Activated B cell treated with CpG ODN at 0.5 μM for 24 hours (primary cell): ENCODE measurements at regions of chr2 and their contacts with region 1.

Region 1: GRCh38 chr2:157404363-157404762 is 39.5 kb downstream of the CYTIP start:
- DNase-seq: no peak
- ATAC-seq: peak; percentile 96
- H3K4me3 Mint-ChIP-seq: peak overlapping the region; percentile 50
- H3K27ac Mint-ChIP-seq: peak overlapping the region; percentile 88
- H3K4me1 Mint-ChIP-seq: peaks cover 62% of the 10 kb centered on the region
- H3K27me3 Mint-ChIP-seq: no peaks in the 10 kb centered on the region
- CTCF ChIP-seq: no peak

Region 2: GRCh38 chr2:157245846-157246764 is 158.3 kb before region 1 on chr2:
- CTCF ChIA-PET with region 1: no interaction called
- POLR2A ChIA-PET with region 1: no interaction called
- intact Hi-C with region 1: no loop called
- DNase-seq: no peak
- ATAC-seq: no peak
- H3K4me3 Mint-ChIP-seq: no peak overlapping the region
- H3K27ac Mint-ChIP-seq: no peak overlapping the region
- H3K4me1 Mint-ChIP-seq: no peaks in the 10 kb centered on the region
- H3K27me3 Mint-ChIP-seq: no peaks in the 10 kb centered on the region
- CTCF ChIP-seq: no peak

Region 3: GRCh38 chr2:157336137-157337010 is 68.0 kb before region 1 on chr2:
- CTCF ChIA-PET with region 1: interaction called, 22 read pairs
- POLR2A ChIA-PET with region 1: interaction called, 4 read pairs
- intact Hi-C with region 1: loop called (anchors 2 kb)
- DNase-seq: no peak
- ATAC-seq: peak; percentile 56
- H3K4me3 Mint-ChIP-seq: peak overlapping the region; percentile 11
- H3K27ac Mint-ChIP-seq: no peak overlapping the region
- H3K4me1 Mint-ChIP-seq: peaks cover 6% of the 10 kb centered on the region
- H3K27me3 Mint-ChIP-seq: no peaks in the 10 kb centered on the region
- CTCF ChIP-seq: peak; percentile 80

Region 4: GRCh38 chr2:157363612-157364101 is 40.7 kb before region 1 on chr2:
- CTCF ChIA-PET with region 1: no interaction called
- POLR2A ChIA-PET with region 1: interaction called, 4 read pairs
- intact Hi-C with region 1: loop called (anchors 2 kb)
- DNase-seq: no peak
- ATAC-seq: peak; percentile 52
- H3K4me3 Mint-ChIP-seq: peak overlapping the region; percentile 16
- H3K27ac Mint-ChIP-seq: peak overlapping the region; percentile 57
- H3K4me1 Mint-ChIP-seq: peaks cover 33% of the 10 kb centered on the region
- H3K27me3 Mint-ChIP-seq: no peaks in the 10 kb centered on the region
- CTCF ChIP-seq: no peak

Region 5: GRCh38 chr2:157420771-157421323 is 16.5 kb after region 1 on chr2:
- CTCF ChIA-PET with region 1: interaction called, 10 read pairs
- POLR2A ChIA-PET with region 1: interaction called, 49 read pairs
- intact Hi-C with region 1: loop called (anchors 1 kb)
- DNase-seq: no peak
- ATAC-seq: peak; percentile 73
- H3K4me3 Mint-ChIP-seq: peak overlapping the region; percentile 63
- H3K27ac Mint-ChIP-seq: peak overlapping the region; percentile 90
- H3K4me1 Mint-ChIP-seq: peaks cover 58% of the 10 kb centered on the region
- H3K27me3 Mint-ChIP-seq: no peaks in the 10 kb centered on the region
- CTCF ChIP-seq: no peak

Region 6: DNA sequence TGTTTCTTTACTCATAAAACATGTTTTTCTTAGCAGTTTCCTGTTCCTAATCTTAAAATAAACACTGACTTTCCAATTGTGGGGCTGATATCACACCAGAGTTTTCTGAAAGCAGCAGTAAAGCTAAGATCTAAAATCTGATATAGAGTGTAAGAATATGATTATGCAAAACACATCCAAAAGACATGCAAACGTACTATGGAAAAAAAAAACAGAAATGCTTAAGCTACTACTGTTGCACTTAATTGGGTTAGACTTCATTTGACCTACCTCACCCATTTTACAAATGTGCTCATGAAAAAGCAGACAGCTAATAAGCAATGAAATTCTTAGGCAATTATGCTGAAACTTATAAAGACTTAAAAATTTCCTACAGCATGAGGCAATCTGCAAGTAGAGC is 29.0 kb after region 1 on chr2:
- CTCF ChIA-PET with region 1: no interaction called
- POLR2A ChIA-PET with region 1: interaction called, 11 read pairs
- intact Hi-C with region 1: no loop called
- DNase-seq: no peak
- ATAC-seq: no peak
- H3K4me3 Mint-ChIP-seq: peak overlapping the region; percentile 57
- H3K27ac Mint-ChIP-seq: peak overlapping the region; percentile 61
- H3K4me1 Mint-ChIP-seq: peaks cover 86% of the 10 kb centered on the region
- H3K27me3 Mint-ChIP-seq: no peaks in the 10 kb centered on the region
- CTCF ChIP-seq: no peak

Region 7: GRCh38 chr2:157468931-157469708 is 64.8 kb after region 1 on chr2:
- CTCF ChIA-PET with region 1: interaction called, 5 read pairs
- POLR2A ChIA-PET with region 1: interaction called, 21 read pairs
- intact Hi-C with region 1: loop called (anchors 1 kb)
- DNase-seq: no peak
- ATAC-seq: peak; percentile 81
- H3K4me3 Mint-ChIP-seq: peak overlapping the region; percentile 81
- H3K27ac Mint-ChIP-seq: peak overlapping the region; percentile 99
- H3K4me1 Mint-ChIP-seq: peaks cover 87% of the 10 kb centered on the region
- H3K27me3 Mint-ChIP-seq: no peaks in the 10 kb centered on the region
- CTCF ChIP-seq: no peak

Region 8: DNA sequence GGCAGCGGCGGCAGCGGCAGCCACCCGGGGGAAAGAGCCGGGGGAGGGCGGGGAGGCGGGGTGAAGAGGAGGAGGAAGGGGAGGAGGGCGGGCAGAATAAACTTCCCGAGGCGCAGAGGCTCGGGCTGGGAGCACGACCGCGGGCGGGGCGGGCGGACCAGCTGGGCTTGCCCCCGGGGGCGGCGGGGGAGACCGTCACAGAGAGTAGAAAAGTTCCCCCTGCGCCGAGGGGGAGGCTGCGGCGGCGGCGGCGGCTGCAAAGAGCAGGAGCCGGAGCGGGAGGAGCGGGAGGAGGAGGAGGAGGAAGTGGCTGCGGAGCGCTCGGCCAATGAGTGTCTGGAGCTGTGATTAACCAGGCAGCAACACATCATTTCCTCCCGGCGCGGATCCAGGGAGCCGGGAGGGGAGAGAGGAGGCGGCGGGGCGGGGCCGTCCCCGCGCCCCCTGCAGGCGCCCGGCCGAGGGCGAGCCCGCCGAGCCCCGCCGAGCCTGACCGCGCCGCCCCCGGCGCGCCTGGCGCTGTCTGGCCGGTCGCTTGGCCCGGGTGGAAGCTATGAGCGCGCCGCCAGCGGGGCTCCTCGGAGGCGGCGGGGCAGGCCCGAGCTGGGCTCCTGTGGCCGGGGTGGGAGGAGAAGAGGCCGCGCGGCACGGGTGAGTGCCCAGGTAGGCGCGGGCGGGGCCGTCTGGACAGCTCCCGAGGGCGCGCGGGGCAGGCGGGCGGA is 471.9 kb after region 1 on chr2 and contains the start of gene ACVR1:
- CTCF ChIA-PET with region 1: no interaction called
- POLR2A ChIA-PET with region 1: no interaction called
- intact Hi-C with region 1: loop called (anchors 10 kb)
- DNase-seq: peak; percentile 76
- ATAC-seq: peak; percentile 80
- H3K4me3 Mint-ChIP-seq: peak within 1 kb of the TSS; percentile 88
- H3K27ac Mint-ChIP-seq: peak within 1 kb of the TSS; percentile 76
- H3K4me1 Mint-ChIP-seq: peaks cover 21% of the 10 kb centered on the region
- H3K27me3 Mint-ChIP-seq: no peaks in the 10 kb centered on the region
- CTCF ChIP-seq: no peak
- total RNA-seq, gene ACVR1: 4.4 and 4.6 TPM in 2 replicates